ENCODE measurements at regions of chr3 and their contacts with region 1.

Region 1: GRCh38 chr3:112519424-112520001 is 20.2 kb upstream of the BTLA start:
- DNase-seq: peak; percentile 48
- H3K4me3 Mint-ChIP-seq: no peak overlapping the region
- H3K27ac Mint-ChIP-seq: no peak overlapping the region
- H3K4me1 Mint-ChIP-seq: peaks cover 34% of the 10 kb centered on the region
- H3K27me3 Mint-ChIP-seq: no peaks in the 10 kb centered on the region

Region 2: DNA sequence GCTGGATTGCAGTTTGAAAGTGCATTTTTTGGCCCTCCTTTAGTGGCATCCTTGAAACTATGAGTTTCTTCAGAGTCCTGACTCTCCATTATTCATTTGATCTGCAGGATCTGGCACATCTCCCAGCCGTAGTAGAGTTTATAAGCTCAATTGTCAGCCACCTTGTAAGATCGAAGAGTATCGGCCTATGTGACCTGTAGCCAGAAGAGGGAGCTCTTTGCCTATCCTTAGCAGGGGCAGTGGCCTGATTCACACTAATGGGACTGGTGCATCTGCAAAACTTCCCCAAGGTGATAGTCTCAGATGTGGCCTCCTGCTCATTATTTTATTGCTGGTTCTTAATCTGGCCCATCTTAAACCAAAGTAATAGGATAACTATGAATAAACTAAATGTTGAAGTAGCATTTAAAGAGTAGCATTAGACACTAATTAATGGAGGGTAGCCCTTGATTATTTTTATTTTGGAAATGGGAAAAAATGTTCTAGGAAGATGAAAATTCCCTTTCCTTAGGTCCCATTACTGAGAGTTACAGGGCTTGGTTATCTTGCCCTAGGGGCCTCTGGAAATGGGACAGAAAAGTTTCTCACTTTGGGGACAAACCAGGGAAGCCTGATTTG is 407.6 kb before region 1 on chr3:
- CTCF ChIA-PET with region 1: interaction called, 15 read pairs
- DNase-seq: peak; percentile 77
- H3K4me3 Mint-ChIP-seq: no peak overlapping the region
- H3K27ac Mint-ChIP-seq: no peak overlapping the region
- H3K4me1 Mint-ChIP-seq: peaks cover 14% of the 10 kb centered on the region
- H3K27me3 Mint-ChIP-seq: no peaks in the 10 kb centered on the region

Region 3: DNA sequence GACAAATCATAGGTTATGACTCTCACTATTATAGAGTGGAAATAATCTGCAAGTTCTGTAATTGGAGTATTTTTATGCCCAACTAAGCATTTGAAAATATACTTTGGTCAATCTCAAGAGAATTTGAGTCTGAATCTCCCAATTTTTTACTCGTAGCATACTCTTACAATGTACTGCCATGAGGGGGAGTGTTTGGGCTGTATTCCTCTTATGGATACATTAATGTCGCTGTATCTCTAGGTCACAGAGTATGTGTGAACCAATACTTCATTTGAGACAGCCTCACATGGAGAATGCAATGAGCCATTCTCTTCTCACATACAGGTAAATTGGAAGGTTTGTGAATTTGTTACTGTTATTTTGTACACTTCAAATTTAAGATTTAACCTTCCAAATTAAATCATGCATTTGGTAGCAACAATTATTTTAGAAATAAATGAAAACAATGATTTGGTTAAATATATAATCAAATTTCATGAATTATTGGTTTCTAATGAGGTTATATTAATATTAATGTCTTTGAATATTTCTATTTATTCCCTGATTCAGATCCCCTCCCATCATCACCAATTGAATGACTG is 192.1 kb before region 1 on chr3:
- CTCF ChIA-PET with region 1: interaction called, 53 read pairs
- DNase-seq: peak; percentile 65
- H3K4me3 Mint-ChIP-seq: no peak overlapping the region
- H3K27ac Mint-ChIP-seq: no peak overlapping the region
- H3K4me1 Mint-ChIP-seq: peaks cover 12% of the 10 kb centered on the region
- H3K27me3 Mint-ChIP-seq: peaks cover 12% of the 10 kb centered on the region

Region 4: GRCh38 chr3:112333002-112333380 is 186.5 kb before region 1 on chr3 and contains the start of gene CD200:
- CTCF ChIA-PET with region 1: interaction called, 14 read pairs
- DNase-seq: peak; percentile 72
- H3K4me3 Mint-ChIP-seq: peak within 1 kb of the TSS; percentile 85
- H3K27ac Mint-ChIP-seq: peak within 1 kb of the TSS; percentile 88
- H3K4me1 Mint-ChIP-seq: peaks cover 54% of the 10 kb centered on the region
- H3K27me3 Mint-ChIP-seq: no peaks in the 10 kb centered on the region

Region 5: GRCh38 chr3:112498914-112499711 is 20.4 kb before region 1 on chr3 and contains the start of gene BTLA:
- CTCF ChIA-PET with region 1: interaction called, 18 read pairs
- DNase-seq: peak; percentile 60
- H3K4me3 Mint-ChIP-seq: peak within 1 kb of the TSS; percentile 100
- H3K27ac Mint-ChIP-seq: peak within 1 kb of the TSS; percentile 94
- H3K4me1 Mint-ChIP-seq: peaks cover 45% of the 10 kb centered on the region
- H3K27me3 Mint-ChIP-seq: no peaks in the 10 kb centered on the region

Region 6: DNA sequence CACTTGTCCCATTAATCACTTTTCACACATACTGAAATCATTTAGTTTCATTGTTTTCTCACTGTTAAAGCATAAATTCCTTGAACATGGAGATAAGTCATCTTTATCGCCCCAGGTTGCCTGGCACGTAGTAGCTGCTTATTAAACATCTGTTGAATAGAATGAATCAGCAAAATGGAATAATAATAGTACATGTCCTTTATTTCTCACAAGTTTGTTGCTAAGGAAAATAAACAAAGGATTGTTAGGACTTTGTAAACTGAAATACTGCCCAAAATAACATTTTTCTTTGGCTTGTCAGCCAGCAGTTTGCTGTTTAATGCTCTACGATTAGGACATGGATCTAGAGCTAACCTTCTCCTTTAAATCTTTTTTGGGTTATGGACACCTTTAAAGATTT is 60.2 kb after region 1 on chr3:
- CTCF ChIA-PET with region 1: no interaction called
- DNase-seq: no peak
- H3K4me3 Mint-ChIP-seq: no peak overlapping the region
- H3K27ac Mint-ChIP-seq: no peak overlapping the region
- H3K4me1 Mint-ChIP-seq: peaks cover 6% of the 10 kb centered on the region
- H3K27me3 Mint-ChIP-seq: no peaks in the 10 kb centered on the region